ENCODE measurements at regions of chr3 and their contacts with region 1.

Region 1: GRCh38 chr3:12984023-12984823 is 89.0 kb downstream of the IQSEC1 start:
- DNase-seq: peak; percentile 70
- H3K4me3 Mint-ChIP-seq: no peak overlapping the region
- H3K27ac Mint-ChIP-seq: no peak overlapping the region
- H3K4me1 Mint-ChIP-seq: peaks cover 33% of the 10 kb centered on the region
- H3K27me3 Mint-ChIP-seq: no peaks in the 10 kb centered on the region

Region 2: DNA sequence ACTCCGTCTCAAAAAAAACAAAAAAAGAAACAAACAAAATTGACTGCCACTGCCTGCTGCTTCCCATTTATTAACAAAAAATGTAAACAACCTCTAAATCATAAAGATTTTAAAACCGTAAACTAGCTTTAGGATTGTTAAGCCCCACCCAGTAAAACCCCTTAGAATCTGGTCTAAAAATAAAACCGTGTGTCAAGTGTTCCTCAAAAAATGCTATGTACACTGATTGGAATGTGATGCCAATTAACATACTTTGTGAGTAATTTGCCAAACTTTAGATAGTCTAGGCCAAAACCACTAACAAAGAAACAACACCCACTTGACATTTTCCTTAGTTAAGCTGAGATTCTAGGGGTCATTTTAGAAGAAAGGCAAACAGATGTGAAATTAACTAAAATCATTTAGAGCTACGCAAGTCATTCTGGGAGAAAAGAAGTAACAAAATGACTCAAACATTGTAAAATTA is 325.6 kb before region 1 on chr3:
- CTCF ChIA-PET with region 1: no interaction called
- DNase-seq: no peak
- H3K4me3 Mint-ChIP-seq: no peak overlapping the region
- H3K27ac Mint-ChIP-seq: no peak overlapping the region
- H3K4me1 Mint-ChIP-seq: peaks cover 44% of the 10 kb centered on the region
- H3K27me3 Mint-ChIP-seq: no peaks in the 10 kb centered on the region

Region 3: GRCh38 chr3:12830785-12831156 is 153.5 kb before region 1 on chr3:
- CTCF ChIA-PET with region 1: no interaction called
- DNase-seq: no peak
- H3K4me3 Mint-ChIP-seq: no peak overlapping the region
- H3K27ac Mint-ChIP-seq: no peak overlapping the region
- H3K4me1 Mint-ChIP-seq: peaks cover 1% of the 10 kb centered on the region
- H3K27me3 Mint-ChIP-seq: no peaks in the 10 kb centered on the region

Region 4: GRCh38 chr3:12967606-12968351 is 16.4 kb before region 1 on chr3:
- CTCF ChIA-PET with region 1: interaction called, 21 read pairs
- DNase-seq: peak; percentile 90
- H3K4me3 Mint-ChIP-seq: peak overlapping the region; percentile 53
- H3K27ac Mint-ChIP-seq: peak overlapping the region; percentile 60
- H3K4me1 Mint-ChIP-seq: peaks cover 54% of the 10 kb centered on the region
- H3K27me3 Mint-ChIP-seq: peaks cover 8% of the 10 kb centered on the region

Region 5: DNA sequence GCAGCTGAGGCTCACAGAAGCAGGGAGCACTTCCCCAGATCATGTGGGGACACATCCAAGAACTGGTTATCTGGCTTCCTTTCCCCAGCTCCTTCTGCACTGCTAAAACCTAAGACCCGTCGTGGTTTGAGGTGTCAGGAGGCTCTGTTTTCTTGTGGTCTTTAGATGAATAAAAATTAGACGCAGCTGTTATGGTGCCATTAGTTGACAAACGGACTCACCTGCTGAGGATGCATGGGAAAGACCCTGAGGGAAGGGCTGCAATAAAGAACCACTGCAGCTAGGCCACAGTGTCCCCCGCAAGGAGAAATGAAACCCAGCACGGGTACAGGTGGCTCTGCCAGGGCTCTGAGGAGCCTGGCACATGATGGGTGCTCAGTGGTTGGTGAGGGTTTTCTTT is 10.4 kb before region 1 on chr3:
- CTCF ChIA-PET with region 1: interaction called, 21 read pairs
- DNase-seq: no peak
- H3K4me3 Mint-ChIP-seq: no peak overlapping the region
- H3K27ac Mint-ChIP-seq: no peak overlapping the region
- H3K4me1 Mint-ChIP-seq: no peaks in the 10 kb centered on the region
- H3K27me3 Mint-ChIP-seq: no peaks in the 10 kb centered on the region

Region 6: DNA sequence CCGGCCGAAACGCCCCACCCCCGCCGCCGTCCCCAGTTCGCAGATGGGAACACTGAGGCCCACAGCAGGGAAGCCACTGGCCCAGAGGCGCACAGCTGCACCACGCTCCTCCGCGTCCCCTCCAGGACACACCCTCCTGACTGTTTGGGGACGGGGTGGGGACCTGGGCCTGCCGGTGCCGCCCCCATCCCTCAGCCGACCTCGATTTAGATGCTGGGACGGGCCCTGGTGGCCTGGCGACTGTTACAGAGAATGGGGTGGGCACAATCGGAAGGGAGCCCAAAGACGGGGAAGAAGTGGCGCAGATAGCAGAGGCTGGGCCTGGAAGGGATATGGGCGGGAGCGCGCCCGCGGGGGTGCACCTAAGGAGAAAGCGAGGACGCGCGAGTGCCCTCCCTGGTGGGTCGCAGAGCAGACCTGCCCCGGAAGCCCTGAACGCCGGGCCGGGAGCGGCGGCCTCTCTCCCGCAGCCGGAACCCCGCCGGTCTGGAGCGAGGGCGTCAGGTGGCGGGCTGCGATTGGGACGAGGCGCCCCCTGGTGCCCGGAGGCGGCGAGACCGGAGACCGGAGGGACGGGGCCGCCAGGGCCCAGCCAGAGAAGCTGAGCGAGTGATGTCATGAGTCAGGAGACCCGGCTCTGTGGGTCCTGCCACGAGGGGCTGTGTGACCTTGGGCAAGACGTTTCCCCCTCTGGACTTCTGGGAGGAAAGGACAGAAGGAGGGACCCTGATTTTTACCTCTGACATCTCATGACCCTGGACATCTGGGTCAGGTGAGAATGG is 10.6 kb after region 1 on chr3:
- CTCF ChIA-PET with region 1: interaction called, 31 read pairs
- DNase-seq: peak; percentile 86
- H3K4me3 Mint-ChIP-seq: peak overlapping the region; percentile 73
- H3K27ac Mint-ChIP-seq: no peak overlapping the region
- H3K4me1 Mint-ChIP-seq: peaks cover 34% of the 10 kb centered on the region
- H3K27me3 Mint-ChIP-seq: peaks cover 22% of the 10 kb centered on the region

Measured in activated naive CD4-positive, alpha-beta T cell treated with anti-CD3 and anti-CD28 coated beads, Interleukin-2, amount 10 ng/mL, durations not matched to agents 7 days and 5 days (primary cell).